GM12878 (cell line): ENCODE measurements at regions of chr7 and their contacts with region 1.

Region 1: GRCh38 chr7:120916538-120916937 is 34.0 kb upstream of the ING3 start:
- DNase-seq: no peak
- ATAC-seq: no peak
- H3K4me3 ChIP-seq: no peak overlapping the region
- H3K27ac ChIP-seq: no peak overlapping the region
- H3K4me1 ChIP-seq: no peaks in the 10 kb centered on the region
- H3K27me3 ChIP-seq: no peaks in the 10 kb centered on the region
- CTCF ChIP-seq: no peak
- EP300 ChIP-seq: no peak
- POLR2A ChIP-seq: no peak
- RAD21 ChIP-seq: no peak

Region 2: GRCh38 chr7:120615703-120616102 is 300.8 kb before region 1 on chr7:
- CTCF ChIA-PET with region 1: no interaction called
- POLR2A ChIA-PET with region 1: no interaction called
- RAD21 ChIA-PET with region 1: no interaction called
- SMC1A ChIA-PET with region 1: no interaction called
- in situ Hi-C with region 1: no loop called
- intact Hi-C with region 1: no loop called
- DNase-seq: peak; percentile 17
- ATAC-seq: peak; percentile 89
- H3K4me3 ChIP-seq: no peak overlapping the region
- H3K27ac ChIP-seq: no peak overlapping the region
- H3K4me1 ChIP-seq: peaks cover 10% of the 10 kb centered on the region
- H3K27me3 ChIP-seq: no peaks in the 10 kb centered on the region
- CTCF ChIP-seq: no peak
- EP300 ChIP-seq: peak in 1 of 2 experiments; percentile 40; a peak in 1 of 4 replicates
- POLR2A ChIP-seq: no peak
- RAD21 ChIP-seq: no peak

Region 3: DNA sequence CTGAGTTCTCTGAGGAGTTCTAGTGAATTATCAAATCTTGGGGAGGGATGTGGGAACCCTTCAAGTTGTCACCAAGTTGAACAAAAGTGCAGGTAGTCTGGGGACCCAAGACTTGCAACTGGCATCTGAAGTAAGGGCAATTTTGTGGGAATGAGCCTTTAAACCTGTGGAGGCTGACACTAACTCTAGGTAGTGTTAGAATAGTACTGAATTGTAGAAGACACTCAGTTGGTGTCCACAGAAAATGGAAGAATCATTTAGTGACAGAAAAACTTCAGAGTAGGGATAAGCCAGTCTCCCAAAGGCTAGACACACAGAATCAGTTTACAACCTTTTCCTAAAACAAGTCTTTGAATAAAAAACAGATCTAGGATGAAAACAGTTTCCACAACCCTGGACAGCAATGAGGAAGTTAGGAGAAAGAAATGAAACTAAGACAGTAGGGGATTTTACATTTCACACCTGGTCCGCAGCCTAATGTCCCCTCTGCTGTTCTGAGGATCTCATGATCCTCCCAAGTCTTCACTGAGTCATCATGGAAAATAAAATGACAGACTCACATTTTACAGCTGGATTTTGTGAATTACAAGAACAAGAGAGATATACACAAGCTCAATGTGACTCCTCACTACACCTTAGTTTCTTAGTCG is 11.0 kb after region 1 on chr7:
- CTCF ChIA-PET with region 1: no interaction called
- POLR2A ChIA-PET with region 1: interaction called, 3 read pairs
- RAD21 ChIA-PET with region 1: interaction called, 3 read pairs
- SMC1A ChIA-PET with region 1: interaction called, 10 read pairs
- in situ Hi-C with region 1: no loop called
- intact Hi-C with region 1: no loop called
- DNase-seq: peak; percentile 46
- ATAC-seq: peak; percentile 90
- H3K4me3 ChIP-seq: no peak overlapping the region
- H3K27ac ChIP-seq: peak overlapping the region; percentile 46; the same call in 1 of the 2 replicates
- H3K4me1 ChIP-seq: peaks cover 4% of the 10 kb centered on the region; the same call in 1 of the 2 replicates
- H3K27me3 ChIP-seq: no peaks in the 10 kb centered on the region
- CTCF ChIP-seq: no peak
- EP300 ChIP-seq: 0 out of 4 replicates have a peak, but pooled peaks of 1 of the 2 experiments have one; percentile 40
- POLR2A ChIP-seq: no peak
- RAD21 ChIP-seq: no peak

Region 4: GRCh38 chr7:121214657-121215056 is 298.1 kb after region 1 on chr7:
- CTCF ChIA-PET with region 1: no interaction called
- POLR2A ChIA-PET with region 1: no interaction called
- RAD21 ChIA-PET with region 1: no interaction called
- SMC1A ChIA-PET with region 1: no interaction called
- in situ Hi-C with region 1: no loop called
- intact Hi-C with region 1: no loop called
- DNase-seq: no peak
- ATAC-seq: no peak
- H3K4me3 ChIP-seq: no peak overlapping the region
- H3K27ac ChIP-seq: no peak overlapping the region
- H3K4me1 ChIP-seq: no peaks in the 10 kb centered on the region
- H3K27me3 ChIP-seq: no peaks in the 10 kb centered on the region
- CTCF ChIP-seq: no peak
- EP300 ChIP-seq: no peak
- POLR2A ChIP-seq: no peak
- RAD21 ChIP-seq: no peak